Endothelial cell of umbilical vein (primary cell): ENCODE measurements at regions of chr9 and their contacts with region 1.

Region 1: GRCh38 chr9:112097712-112098688 is 77.1 kb downstream of the SUSD1 start:
- DNase-seq: peak; percentile 76
- H3K4me3 ChIP-seq: no peak overlapping the region
- H3K27ac ChIP-seq: no peak overlapping the region
- H3K4me1 ChIP-seq: no peaks in the 10 kb centered on the region
- H3K27me3 ChIP-seq: no peaks in the 10 kb centered on the region
- CTCF ChIP-seq: peak; percentile 83 to 85
- POLR2A ChIP-seq: no peak

Region 2: DNA sequence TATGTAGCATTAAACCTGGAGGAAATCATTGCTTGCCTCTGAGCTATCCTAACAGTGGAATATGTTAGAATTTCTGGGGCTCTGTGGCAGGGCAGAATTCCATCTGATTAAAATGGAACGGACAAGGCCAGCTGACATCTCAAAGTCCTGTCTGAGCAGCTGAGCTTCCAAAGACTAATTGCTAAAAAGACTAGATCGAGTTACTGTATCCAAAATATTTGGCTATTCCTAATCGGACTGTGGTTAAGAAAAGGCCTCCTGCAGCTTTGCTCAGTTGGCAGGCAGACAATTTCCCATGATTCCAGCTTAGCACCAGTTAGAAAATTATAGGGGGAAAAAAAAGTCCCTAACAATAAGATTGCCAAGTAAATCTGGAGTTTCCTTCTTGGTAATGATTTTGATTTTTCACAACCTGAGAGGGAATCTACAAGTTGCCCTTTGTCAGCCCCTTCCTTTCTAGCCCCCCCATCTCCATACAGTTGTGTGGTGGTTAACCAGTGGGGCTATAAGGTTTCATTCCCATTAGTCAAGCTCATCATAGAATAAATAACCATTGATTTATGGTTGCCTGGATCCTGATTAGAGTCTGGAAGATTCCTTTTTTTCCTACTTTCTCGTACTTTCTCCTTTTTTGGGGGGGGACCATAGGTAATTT is 524.9 kb before region 1 on chr9:
- CTCF ChIA-PET with region 1: no interaction called
- POLR2A ChIA-PET with region 1: no interaction called
- dilution Hi-C with region 1: no loop called
- intact Hi-C with region 1: no loop called
- DNase-seq: no peak
- H3K4me3 ChIP-seq: no peak overlapping the region
- H3K27ac ChIP-seq: no peak overlapping the region
- H3K4me1 ChIP-seq: no peaks in the 10 kb centered on the region
- H3K27me3 ChIP-seq: no peaks in the 10 kb centered on the region
- CTCF ChIP-seq: no peak
- POLR2A ChIP-seq: no peak

Region 3: GRCh38 chr9:111957856-111958652 is 139.9 kb before region 1 on chr9:
- CTCF ChIA-PET with region 1: no interaction called
- POLR2A ChIA-PET with region 1: no interaction called
- dilution Hi-C with region 1: no loop called
- intact Hi-C with region 1: no loop called
- DNase-seq: peak; percentile 96
- H3K4me3 ChIP-seq: peak overlapping the region in 1 of 3 experiments; percentile 6
- H3K27ac ChIP-seq: peak overlapping the region; percentile 89
- H3K4me1 ChIP-seq: peaks cover 43% of the 10 kb centered on the region
- H3K27me3 ChIP-seq: no peaks in the 10 kb centered on the region
- CTCF ChIP-seq: no peak
- POLR2A ChIP-seq: peak; percentile 79

Region 4: GRCh38 chr9:112086627-112087026 is 11.4 kb before region 1 on chr9:
- CTCF ChIA-PET with region 1: interaction called, 26 read pairs
- POLR2A ChIA-PET with region 1: no interaction called
- dilution Hi-C with region 1: no loop called
- intact Hi-C with region 1: no loop called
- DNase-seq: peak; percentile 48
- H3K4me3 ChIP-seq: no peak overlapping the region
- H3K27ac ChIP-seq: no peak overlapping the region
- H3K4me1 ChIP-seq: peaks cover 10% of the 10 kb centered on the region
- H3K27me3 ChIP-seq: no peaks in the 10 kb centered on the region
- CTCF ChIP-seq: peak; percentile 21 to 34
- POLR2A ChIP-seq: no peak

Region 5: GRCh38 chr9:112174218-112174964 is 76.4 kb after region 1 on chr9:
- CTCF ChIA-PET with region 1: interaction called, 4 read pairs
- POLR2A ChIA-PET with region 1: no interaction called
- dilution Hi-C with region 1: no loop called
- intact Hi-C with region 1: loop called (anchors 2 kb)
- DNase-seq: peak; percentile 35
- H3K4me3 ChIP-seq: peak overlapping the region; percentile 34 to 74 (median 60)
- H3K27ac ChIP-seq: peak overlapping the region; percentile 37
- H3K4me1 ChIP-seq: peaks cover 8% of the 10 kb centered on the region
- H3K27me3 ChIP-seq: no peaks in the 10 kb centered on the region
- CTCF ChIP-seq: no peak
- POLR2A ChIP-seq: no peak

Region 6: DNA sequence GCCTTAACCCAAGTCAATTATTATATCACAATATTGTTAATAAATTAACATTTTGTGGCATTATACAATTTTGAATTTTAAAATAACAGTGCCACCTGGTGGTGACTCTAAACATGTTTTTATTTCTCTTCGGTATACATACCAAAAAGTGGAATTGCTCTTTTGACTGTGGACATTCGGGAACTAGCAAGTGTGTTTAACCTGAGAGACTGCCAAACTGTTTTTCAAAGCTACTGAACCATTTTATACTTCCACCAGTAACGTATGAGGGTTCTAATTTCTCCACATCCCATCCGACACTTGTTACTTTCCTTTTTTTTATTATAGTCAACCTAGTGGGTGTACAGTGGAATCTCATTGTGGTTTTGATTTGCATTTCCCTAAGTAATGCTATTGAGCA is 263.6 kb after region 1 on chr9:
- CTCF ChIA-PET with region 1: interaction called, 81 read pairs
- POLR2A ChIA-PET with region 1: no interaction called
- dilution Hi-C with region 1: no loop called
- intact Hi-C with region 1: loop called (anchors 1 kb)
- DNase-seq: peak; percentile 55
- H3K4me3 ChIP-seq: no peak overlapping the region
- H3K27ac ChIP-seq: no peak overlapping the region
- H3K4me1 ChIP-seq: peaks cover 4% of the 10 kb centered on the region
- H3K27me3 ChIP-seq: no peaks in the 10 kb centered on the region
- CTCF ChIP-seq: peak in 1 of 2 donors; percentile 10
- POLR2A ChIP-seq: no peak

Region 7: DNA sequence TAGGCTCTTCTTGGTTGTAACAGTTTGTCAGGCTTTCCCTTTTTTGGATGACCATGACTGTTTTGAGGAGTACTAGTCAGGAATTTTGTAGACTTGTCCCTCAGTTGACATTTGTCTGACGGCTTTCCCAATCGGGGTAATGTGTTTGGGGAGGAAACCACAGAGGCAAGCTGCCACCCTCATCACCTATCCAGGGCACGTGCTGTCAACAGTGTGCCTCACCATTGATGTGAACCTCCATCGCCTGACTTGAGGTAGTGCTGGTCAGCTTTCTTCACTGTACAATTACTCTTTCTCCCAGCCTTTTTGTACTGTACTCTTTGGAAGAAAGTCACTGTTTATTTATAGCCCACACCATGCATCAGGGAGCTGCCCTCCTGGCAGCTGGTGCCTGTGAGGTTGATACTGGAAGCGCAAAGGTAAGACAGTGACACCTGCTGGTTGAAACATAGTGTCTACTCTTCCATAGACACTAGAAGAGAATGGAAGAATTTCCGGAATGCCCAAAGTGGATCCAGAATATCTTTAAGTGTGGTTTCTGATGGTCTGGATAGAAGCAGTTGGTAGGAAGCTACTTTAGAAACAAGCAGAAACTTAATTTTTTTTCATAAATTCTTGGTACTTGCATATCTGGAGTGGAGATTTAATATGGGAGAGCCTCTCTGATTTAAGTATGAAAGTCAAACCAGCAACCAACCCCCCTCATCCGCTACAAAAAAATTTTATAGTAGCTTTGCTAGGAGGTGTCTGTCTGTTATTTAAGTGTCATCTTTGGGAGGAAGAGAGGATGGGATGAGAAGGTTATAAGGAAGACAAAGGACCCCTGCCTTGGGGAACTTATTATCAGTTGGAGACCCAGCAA is 721.9 kb after region 1 on chr9:
- CTCF ChIA-PET with region 1: no interaction called
- POLR2A ChIA-PET with region 1: no interaction called
- dilution Hi-C with region 1: no loop called
- intact Hi-C with region 1: loop called (anchors 10 kb)
- DNase-seq: peak; percentile 50
- H3K4me3 ChIP-seq: no peak overlapping the region
- H3K27ac ChIP-seq: no peak overlapping the region
- H3K4me1 ChIP-seq: no peaks in the 10 kb centered on the region
- H3K27me3 ChIP-seq: no peaks in the 10 kb centered on the region
- CTCF ChIP-seq: peak; percentile 55 to 60
- POLR2A ChIP-seq: no peak